Right cardiac atrium (tissue), 5 donors: ENCODE measurements at regions of chr15 and their contacts with region 1.

Region 1: GRCh38 chr15:80989518-80990478 is at the start of gene MESD:
- DNase-seq: peak; percentile 98 to 100 (median 99)
- ATAC-seq: peak; percentile 98 to 99
- H3K4me3 ChIP-seq: peak within 1 kb of the TSS; percentile 57
- H3K27ac ChIP-seq: peak within 1 kb of the TSS; percentile 95
- H3K4me1 ChIP-seq: peaks cover 13% of the 10 kb centered on the region
- H3K27me3 ChIP-seq: no peaks in the 10 kb centered on the region
- total RNA-seq, gene MESD: 15.7 to 18.9 (median 17.3) TPM

Region 2: GRCh38 chr15:81054236-81054635 is 64.4 kb after region 1 on chr15:
- intact Hi-C with region 1: no loop called
- DNase-seq: no peak
- ATAC-seq: no peak
- H3K4me3 ChIP-seq: no peak overlapping the region
- H3K27ac ChIP-seq: no peak overlapping the region
- H3K4me1 ChIP-seq: peaks cover 2% of the 10 kb centered on the region
- H3K27me3 ChIP-seq: no peaks in the 10 kb centered on the region

Region 3: DNA sequence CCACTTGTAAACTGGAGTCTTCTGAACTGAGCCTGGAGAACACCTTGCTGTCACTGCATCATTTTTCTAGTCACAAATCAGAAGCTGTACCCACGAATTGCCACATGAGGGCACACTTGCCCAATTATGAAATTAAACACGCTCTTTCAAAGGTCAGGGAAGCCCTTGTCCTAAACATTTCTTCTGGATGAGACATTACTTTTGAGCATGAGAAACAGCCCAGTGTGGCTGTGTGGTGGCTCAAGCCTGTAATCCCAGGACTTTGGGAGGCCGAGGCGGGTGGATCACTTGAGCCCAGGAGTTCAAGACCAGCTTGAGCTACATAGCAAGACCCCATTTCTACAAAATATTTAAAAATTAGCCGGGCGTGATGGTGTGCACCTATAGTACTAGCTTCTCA is 116.8 kb after region 1 on chr15:
- intact Hi-C with region 1: loop called in 1 of 4 experiments (anchors 10 kb)
- DNase-seq: peak in 2 of 3 donors; percentile 31 to 64
- ATAC-seq: peak; percentile 71 to 83
- H3K4me3 ChIP-seq: no peak overlapping the region
- H3K27ac ChIP-seq: no peak overlapping the region
- H3K4me1 ChIP-seq: peaks cover 2% of the 10 kb centered on the region
- H3K27me3 ChIP-seq: no peaks in the 10 kb centered on the region